ENCODE measurements at regions of chr7 and their contacts with region 1.

Region 1: GRCh38 chr7:128108641-128109423 is 77.6 kb upstream of the LRRC4 start:
- DNase-seq: peak; percentile 75
- ATAC-seq: peak; percentile 69
- H3K4me3 ChIP-seq: peak overlapping the region in 4 of 5 experiments; percentile 8 to 27 (median 12)
- H3K4me3 Mint-ChIP-seq: peak overlapping the region; percentile 77
- H3K27ac ChIP-seq: peak overlapping the region; percentile 78 to 89
- H3K27ac Mint-ChIP-seq: peak overlapping the region; percentile 90
- H3K4me1 ChIP-seq: peaks cover 78 to 89% of the 10 kb centered on the region in 2 donors
- H3K4me1 Mint-ChIP-seq: peaks cover 79% of the 10 kb centered on the region
- H3K27me3 ChIP-seq: no peaks in the 10 kb centered on the region
- H3K27me3 Mint-ChIP-seq: no peaks in the 10 kb centered on the region
- CTCF ChIP-seq: no peak

Region 2: DNA sequence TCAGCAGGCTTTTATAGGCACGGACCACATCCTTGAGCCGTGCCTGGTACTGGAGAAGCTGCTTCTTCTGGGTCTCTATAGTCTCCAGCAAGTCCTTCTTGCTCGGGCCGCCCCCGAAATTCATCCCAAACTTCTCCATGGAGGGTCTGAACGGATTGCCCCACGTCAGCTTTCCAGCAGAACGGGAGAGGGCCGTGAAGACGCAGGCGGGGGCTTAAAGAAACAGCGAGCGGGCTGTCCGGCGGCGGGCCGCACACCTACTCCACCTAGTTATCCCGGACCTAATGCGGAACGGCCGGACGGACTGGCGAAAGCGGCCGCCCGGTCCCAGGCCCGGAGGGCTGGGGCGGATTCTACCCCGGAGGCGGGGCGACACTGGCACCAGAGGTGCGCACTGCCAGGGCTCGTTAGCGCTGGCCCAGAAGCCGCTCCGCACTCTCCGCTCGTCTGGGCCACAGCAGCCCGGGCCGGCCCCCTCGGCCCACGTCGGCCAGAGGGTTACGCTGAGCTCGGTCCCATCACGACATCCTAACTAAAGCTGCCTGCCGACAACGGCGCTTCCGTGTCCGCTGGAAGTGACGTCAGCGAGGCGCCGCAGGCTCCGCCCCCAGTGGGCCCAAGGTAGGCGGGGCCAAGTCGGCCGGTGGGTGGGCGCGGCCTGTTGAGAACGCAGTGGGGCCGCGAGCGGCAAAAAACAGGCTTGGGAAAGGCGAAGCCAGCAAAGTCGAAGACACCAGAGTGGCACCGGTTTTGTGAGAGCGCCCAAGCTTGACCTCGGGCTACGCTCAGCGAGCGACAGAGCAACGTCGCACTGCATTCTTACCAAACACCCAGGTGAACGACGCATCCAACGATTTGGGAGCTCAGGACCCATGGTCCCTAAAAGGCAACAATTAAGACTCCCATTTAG is 523.5 kb before region 1 on chr7 and contains the start of gene GCC1:
- CTCF ChIA-PET with region 1: no interaction called
- POLR2A ChIA-PET with region 1: no interaction called
- intact Hi-C with region 1: loop called (anchors 2 kb)
- DNase-seq: peak; percentile 95
- ATAC-seq: peak; percentile 80
- H3K4me3 ChIP-seq: peak within 1 kb of the TSS; percentile 84 to 97 (median 95)
- H3K4me3 Mint-ChIP-seq: peak within 1 kb of the TSS; percentile 89
- H3K27ac ChIP-seq: peak within 1 kb of the TSS; percentile 55 to 89
- H3K27ac Mint-ChIP-seq: peak within 1 kb of the TSS; percentile 89
- H3K4me1 ChIP-seq: peaks cover 45 to 54% of the 10 kb centered on the region in 2 donors
- H3K4me1 Mint-ChIP-seq: peaks cover 73% of the 10 kb centered on the region
- H3K27me3 ChIP-seq: no peaks in the 10 kb centered on the region
- H3K27me3 Mint-ChIP-seq: no peaks in the 10 kb centered on the region
- CTCF ChIP-seq: no peak
- total RNA-seq, gene GCC1: 25.5 and 26.4 TPM in 2 replicates

Region 3: GRCh38 chr7:128031901-128032604 is 76.8 kb before region 1 on chr7:
- CTCF ChIA-PET with region 1: no interaction called
- POLR2A ChIA-PET with region 1: no interaction called
- intact Hi-C with region 1: loop called (anchors 5 kb)
- DNase-seq: peak; percentile 74
- ATAC-seq: peak; percentile 83
- H3K4me3 ChIP-seq: peak overlapping the region; percentile 15 to 57 (median 51)
- H3K4me3 Mint-ChIP-seq: peak overlapping the region; percentile 96
- H3K27ac ChIP-seq: no peak overlapping the region
- H3K27ac Mint-ChIP-seq: peak overlapping the region; percentile 78
- H3K4me1 ChIP-seq: peaks cover 13 to 26% of the 10 kb centered on the region in 2 donors
- H3K4me1 Mint-ChIP-seq: peaks cover 28% of the 10 kb centered on the region
- H3K27me3 ChIP-seq: peaks cover 0 to 18% (median 0%) of the 10 kb centered on the region in 4 experiments
- H3K27me3 Mint-ChIP-seq: peaks cover 8% of the 10 kb centered on the region
- CTCF ChIP-seq: no peak

Region 4: DNA sequence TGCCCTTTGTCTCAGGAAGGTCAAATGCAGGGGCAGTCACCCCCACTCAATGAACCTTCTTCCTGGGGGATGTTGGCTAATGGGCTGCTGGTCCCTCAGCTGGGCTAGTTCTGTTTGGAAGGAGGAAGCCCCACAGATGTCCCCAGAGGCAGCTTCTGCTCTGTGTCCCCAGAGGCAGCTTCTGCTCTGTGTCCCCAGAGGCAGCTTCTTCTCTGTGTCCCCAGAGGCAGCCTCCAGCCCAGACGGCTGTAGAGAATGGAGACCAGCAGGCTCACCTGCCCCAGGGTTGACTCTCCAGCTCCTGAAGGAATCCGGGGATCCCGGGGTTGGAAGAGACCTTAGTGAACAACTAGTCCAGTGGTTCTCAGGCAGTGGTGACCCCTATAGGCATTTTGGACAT is 69.8 kb after region 1 on chr7:
- CTCF ChIA-PET with region 1: no interaction called
- POLR2A ChIA-PET with region 1: no interaction called
- intact Hi-C with region 1: loop called (anchors 2 kb)
- DNase-seq: peak; percentile 70
- ATAC-seq: peak; percentile 100
- H3K4me3 ChIP-seq: no peak overlapping the region
- H3K4me3 Mint-ChIP-seq: peak overlapping the region; percentile 44
- H3K27ac ChIP-seq: no peak overlapping the region
- H3K27ac Mint-ChIP-seq: peak overlapping the region; percentile 72
- H3K4me1 ChIP-seq: peaks cover 29 to 35% of the 10 kb centered on the region in 2 donors
- H3K4me1 Mint-ChIP-seq: peaks cover 45% of the 10 kb centered on the region
- H3K27me3 ChIP-seq: peaks cover 0 to 18% (median 4%) of the 10 kb centered on the region in 4 experiments
- H3K27me3 Mint-ChIP-seq: peaks cover 47% of the 10 kb centered on the region
- CTCF ChIP-seq: no peak

Measured in B cell (primary cell).